Ascending aorta (tissue), 2 donors: ENCODE measurements at regions of chr6 and their contacts with region 1.

Region 1: GRCh38 chr6:11609315-11610071 is 71.9 kb downstream of the TMEM170B start:
- DNase-seq: peak; percentile 25 to 90
- H3K4me3 ChIP-seq: peak overlapping the region in 1 of 2 donors; percentile 8
- H3K27ac ChIP-seq: peak overlapping the region; percentile 65 to 79
- H3K4me1 ChIP-seq: peaks cover 12 to 48% of the 10 kb centered on the region in 2 donors
- H3K27me3 ChIP-seq: no peaks in the 10 kb centered on the region
- CTCF ChIP-seq: no peak

Region 2: GRCh38 chr6:11766589-11767450 is 157.3 kb after region 1 on chr6:
- intact Hi-C with region 1: loop called (anchors 10 kb)
- DNase-seq: peak in 1 of 2 donors; percentile 83
- H3K4me3 ChIP-seq: no peak overlapping the region
- H3K27ac ChIP-seq: peak overlapping the region; percentile 81 to 84
- H3K4me1 ChIP-seq: peaks cover 22 to 79% of the 10 kb centered on the region in 2 donors
- H3K27me3 ChIP-seq: no peaks in the 10 kb centered on the region
- CTCF ChIP-seq: no peak

Region 3: GRCh38 chr6:12483712-12484111 is 874.2 kb after region 1 on chr6:
- intact Hi-C with region 1: loop called (anchors 10 kb)
- DNase-seq: peak in 1 of 2 donors; percentile 78
- H3K4me3 ChIP-seq: peak overlapping the region; percentile 19 to 36
- H3K27ac ChIP-seq: peak overlapping the region; percentile 12 to 15
- H3K4me1 ChIP-seq: peaks cover 0 to 13% of the 10 kb centered on the region in 2 donors
- H3K27me3 ChIP-seq: no peaks in the 10 kb centered on the region
- CTCF ChIP-seq: no peak